ENCODE measurements at regions of chr3 and their contacts with region 1.

Region 1: GRCh38 chr3:50298836-50299637 is at the starts of genes HYAL3 and NAA80:
- DNase-seq: peak; percentile 95 to 100 (median 99)
- ATAC-seq: peak; percentile 85 to 86
- H3K4me3 Mint-ChIP-seq: peak within 1 kb of the TSS; percentile 95 to 99 (median 97)
- H3K27ac Mint-ChIP-seq: peak within 1 kb of the TSS; percentile 95 to 100 (median 99)
- H3K4me1 Mint-ChIP-seq: peaks cover 19 to 41% (median 34%) of the 10 kb centered on the region in 4 donors
- H3K27me3 Mint-ChIP-seq: no peaks in the 10 kb centered on the region
- polyA plus RNA-seq, gene HYAL3: 2.5 to 3.8 (median 3.0) TPM
- polyA plus RNA-seq, gene NAA80: 10.8 to 18.7 (median 17.4) TPM

Region 2: GRCh38 chr3:50164984-50165909 is 133.8 kb before region 1 on chr3:
- POLR2A ChIA-PET with region 1: no interaction called
- DNase-seq: peak in 1 of 10 donors; percentile 24
- ATAC-seq: no peak
- H3K4me3 Mint-ChIP-seq: no peak overlapping the region
- H3K27ac Mint-ChIP-seq: no peak overlapping the region
- H3K4me1 Mint-ChIP-seq: peaks cover 0 to 2% (median 0%) of the 10 kb centered on the region in 4 donors
- H3K27me3 Mint-ChIP-seq: no peaks in the 10 kb centered on the region

Region 3: GRCh38 chr3:50256807-50257535 is 42.1 kb before region 1 on chr3:
- POLR2A ChIA-PET with region 1: no interaction called
- DNase-seq: no peak
- ATAC-seq: no peak
- H3K4me3 Mint-ChIP-seq: peak overlapping the region in 1 of 10 donors; percentile 5
- H3K27ac Mint-ChIP-seq: peak overlapping the region in 5 of 10 donors; percentile 21 to 68 (median 56)
- H3K4me1 Mint-ChIP-seq: peaks cover 2 to 27% (median 19%) of the 10 kb centered on the region in 4 donors
- H3K27me3 Mint-ChIP-seq: no peaks in the 10 kb centered on the region

Region 4: GRCh38 chr3:50272911-50273693 is 25.9 kb before region 1 on chr3:
- POLR2A ChIA-PET with region 1: interaction called, 10 read pairs
- DNase-seq: peak; percentile 65 to 90 (median 82)
- ATAC-seq: peak; percentile 84 to 87
- H3K4me3 Mint-ChIP-seq: peak overlapping the region in 9 of 10 donors; percentile 52 to 84 (median 72)
- H3K27ac Mint-ChIP-seq: peak overlapping the region in 6 of 10 donors; percentile 37 to 79 (median 72)
- H3K4me1 Mint-ChIP-seq: peaks cover 16 to 29% (median 27%) of the 10 kb centered on the region in 4 donors
- H3K27me3 Mint-ChIP-seq: peaks cover 13 to 55% (median 25%) of the 10 kb centered on the region in 5 donors

Region 5: DNA sequence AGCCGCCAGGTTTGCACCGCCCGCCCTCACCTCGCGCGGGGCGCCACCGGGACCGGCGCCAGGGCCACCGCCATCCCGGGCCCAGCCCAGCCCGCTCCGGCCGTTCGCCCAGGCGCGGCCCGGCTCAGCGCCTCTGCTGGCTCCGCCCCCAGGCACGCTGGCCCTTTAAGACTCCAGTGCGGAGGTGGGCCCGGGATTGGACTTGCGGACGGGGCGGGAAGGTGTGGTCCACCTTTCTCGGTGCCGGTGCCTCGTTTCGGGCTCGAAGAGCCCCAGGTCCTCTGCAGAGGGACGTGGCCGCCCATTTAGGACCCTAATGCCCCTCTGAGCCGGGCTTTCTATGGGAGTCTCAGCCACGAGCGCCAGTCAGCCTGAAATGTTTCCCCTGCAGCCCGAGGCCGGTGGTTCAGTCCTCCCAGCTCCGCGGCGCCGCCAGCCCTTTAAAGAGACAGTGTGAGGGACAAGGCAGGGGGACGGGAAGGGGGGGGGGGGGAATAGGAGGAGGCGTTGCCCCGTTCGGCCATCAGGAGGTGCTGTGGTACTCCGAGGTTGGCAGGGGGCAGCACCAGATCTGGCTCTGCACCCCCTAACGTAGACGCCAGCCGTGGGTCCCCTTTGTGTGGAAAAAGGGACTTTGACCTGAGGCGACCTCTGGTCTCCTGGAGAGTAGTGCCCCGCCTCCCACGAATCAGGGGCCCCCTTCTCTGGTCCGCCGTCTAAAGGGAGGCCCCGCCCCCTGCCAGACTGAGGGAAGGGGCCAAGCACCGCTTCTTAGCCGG is 22.5 kb after region 1 on chr3:
- POLR2A ChIA-PET with region 1: interaction called, 27 read pairs
- DNase-seq: peak; percentile 70 to 90 (median 78)
- ATAC-seq: peak; percentile 74 to 78
- H3K4me3 Mint-ChIP-seq: peak overlapping the region; percentile 79 to 92 (median 86)
- H3K27ac Mint-ChIP-seq: peak overlapping the region; percentile 73 to 97 (median 93)
- H3K4me1 Mint-ChIP-seq: peaks cover 18 to 56% (median 45%) of the 10 kb centered on the region in 4 donors
- H3K27me3 Mint-ChIP-seq: no peaks in the 10 kb centered on the region

Region 6: GRCh38 chr3:50327943-50328691 is 29.1 kb after region 1 on chr3 and contains the start of gene TUSC2:
- POLR2A ChIA-PET with region 1: interaction called, 15 read pairs
- DNase-seq: peak; percentile 89 to 97 (median 92)
- ATAC-seq: peak; percentile 93 to 96
- H3K4me3 Mint-ChIP-seq: peak within 1 kb of the TSS; percentile 84 to 97 (median 94)
- H3K27ac Mint-ChIP-seq: peak within 1 kb of the TSS; percentile 85 to 97 (median 95)
- H3K4me1 Mint-ChIP-seq: peaks cover 6 to 38% (median 34%) of the 10 kb centered on the region in 4 donors
- H3K27me3 Mint-ChIP-seq: no peaks in the 10 kb centered on the region
- polyA plus RNA-seq, gene TUSC2: 48.4 to 54.3 (median 53.7) TPM

Region 7: DNA sequence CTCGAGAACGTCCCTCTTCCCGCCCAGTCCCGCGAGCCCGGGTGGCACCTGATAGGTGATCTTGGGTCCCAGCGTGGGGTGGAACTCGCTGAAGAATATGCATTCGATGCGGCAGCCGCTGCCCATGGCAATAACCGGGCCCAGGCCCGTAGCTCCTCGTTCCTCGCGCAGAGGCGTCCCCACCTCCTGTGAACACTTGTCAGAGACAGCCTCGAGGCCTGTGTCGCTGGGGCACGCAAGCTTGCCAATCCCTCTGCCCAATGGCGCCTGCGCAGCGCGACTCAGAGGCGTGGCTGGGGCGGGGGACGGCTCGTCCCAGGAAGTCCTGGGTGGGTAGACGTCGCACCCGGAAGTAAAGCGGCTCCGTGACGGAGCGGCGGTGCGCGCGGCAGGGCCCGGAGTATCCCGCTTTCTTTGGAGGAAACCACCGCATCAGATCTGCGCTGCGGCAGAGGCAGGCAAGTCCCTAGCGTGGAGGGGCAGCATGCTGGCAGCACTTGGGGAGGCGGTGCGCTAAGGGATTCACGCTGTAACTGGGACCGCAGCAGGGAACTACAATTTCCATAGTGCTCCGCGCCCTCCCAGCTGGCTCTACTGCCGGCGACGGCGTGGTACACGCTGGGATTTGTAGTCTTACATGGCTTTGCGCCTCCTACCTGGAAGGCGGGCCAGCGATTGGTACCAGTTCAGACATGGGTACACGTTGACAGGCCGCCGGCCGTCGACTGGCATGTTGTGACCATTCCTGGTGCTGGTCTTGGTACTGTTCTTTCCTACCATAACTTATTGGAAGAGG is 51.7 kb after region 1 on chr3 and contains the starts of genes CYB561D2 and NPRL2:
- POLR2A ChIA-PET with region 1: interaction called, 19 read pairs
- DNase-seq: peak; percentile 97 to 99 (median 99)
- ATAC-seq: peak; percentile 89 to 90
- H3K4me3 Mint-ChIP-seq: peak within 1 kb of the TSS; percentile 94 to 99 (median 97)
- H3K27ac Mint-ChIP-seq: peak within 1 kb of the TSS; percentile 98 to 100 (median 99)
- H3K4me1 Mint-ChIP-seq: peaks cover 34 to 82% (median 68%) of the 10 kb centered on the region in 4 donors
- H3K27me3 Mint-ChIP-seq: no peaks in the 10 kb centered on the region
- polyA plus RNA-seq, gene CYB561D2: 45.5 to 48.2 (median 47.7) TPM
- polyA plus RNA-seq, gene NPRL2: 36.2 to 45.3 (median 36.4) TPM

Region 8: GRCh38 chr3:50365080-50365841 is 66.2 kb after region 1 on chr3:
- POLR2A ChIA-PET with region 1: interaction called, 12 read pairs
- DNase-seq: peak; percentile 91 to 98 (median 94)
- ATAC-seq: peak; percentile 96 to 97
- H3K4me3 Mint-ChIP-seq: peak overlapping the region; percentile 87 to 93 (median 88)
- H3K27ac Mint-ChIP-seq: peak overlapping the region; percentile 81 to 97 (median 96)
- H3K4me1 Mint-ChIP-seq: peaks cover 14 to 44% (median 31%) of the 10 kb centered on the region in 4 donors
- H3K27me3 Mint-ChIP-seq: no peaks in the 10 kb centered on the region

Measured in naive thymus-derived CD8-positive, alpha-beta T cell (primary cell).